ENCODE measurements at regions of chr6 and their contacts with region 1.

Region 1: GRCh38 chr6:158026054-158026900 is 44.6 kb downstream of the SYNJ2 start:
- DNase-seq: peak; percentile 89
- ATAC-seq: peak; percentile 80
- H3K4me3 Mint-ChIP-seq: peak overlapping the region; percentile 69
- H3K27ac Mint-ChIP-seq: peak overlapping the region; percentile 99
- H3K4me1 Mint-ChIP-seq: peaks cover 52% of the 10 kb centered on the region
- H3K27me3 Mint-ChIP-seq: no peaks in the 10 kb centered on the region

Region 2: DNA sequence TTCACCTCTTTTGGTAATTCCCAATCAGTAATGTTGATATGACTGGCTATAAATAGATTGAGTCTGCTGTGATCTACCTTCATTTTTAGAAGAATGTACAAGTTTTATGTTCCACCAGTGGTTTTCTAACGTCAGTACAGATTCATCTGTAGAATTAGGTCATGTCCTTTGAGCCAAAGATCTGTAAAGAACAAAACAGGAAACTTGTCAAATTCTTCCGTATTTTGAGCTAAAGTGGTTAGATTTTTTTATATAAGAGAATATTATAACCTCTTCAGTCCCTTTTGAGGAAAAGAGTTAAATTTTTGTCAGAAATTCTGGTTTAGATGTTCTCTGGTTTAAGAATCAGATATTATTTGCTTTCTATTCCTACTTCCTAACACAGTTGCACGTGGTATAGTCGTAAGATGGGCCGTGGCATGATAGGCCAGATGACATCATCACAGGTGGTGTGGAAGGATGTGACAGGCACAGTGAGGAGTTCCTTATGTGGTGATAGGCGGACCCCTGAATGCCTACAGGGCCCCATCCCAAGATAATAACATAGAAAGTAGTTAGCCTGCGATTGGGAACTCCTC is 141.0 kb before region 1 on chr6:
- CTCF ChIA-PET with region 1: interaction called, 11 read pairs
- POLR2A ChIA-PET with region 1: no interaction called
- DNase-seq: peak; percentile 76
- ATAC-seq: peak; percentile 86
- H3K4me3 Mint-ChIP-seq: no peak overlapping the region
- H3K27ac Mint-ChIP-seq: peak overlapping the region; percentile 58
- H3K4me1 Mint-ChIP-seq: peaks cover 33% of the 10 kb centered on the region
- H3K27me3 Mint-ChIP-seq: no peaks in the 10 kb centered on the region

Region 3: GRCh38 chr6:157981395-157982296 is 44.6 kb before region 1 on chr6 and contains the start of gene SYNJ2:
- CTCF ChIA-PET with region 1: interaction called, 40 read pairs
- POLR2A ChIA-PET with region 1: interaction called, 11 read pairs
- DNase-seq: peak; percentile 91
- ATAC-seq: peak; percentile 94
- H3K4me3 Mint-ChIP-seq: peak within 1 kb of the TSS; percentile 95
- H3K27ac Mint-ChIP-seq: peak within 1 kb of the TSS; percentile 86
- H3K4me1 Mint-ChIP-seq: peaks cover 78% of the 10 kb centered on the region
- H3K27me3 Mint-ChIP-seq: peaks cover 13% of the 10 kb centered on the region
- total RNA-seq, gene SYNJ2: 38.2 to 38.5 TPM

Region 4: DNA sequence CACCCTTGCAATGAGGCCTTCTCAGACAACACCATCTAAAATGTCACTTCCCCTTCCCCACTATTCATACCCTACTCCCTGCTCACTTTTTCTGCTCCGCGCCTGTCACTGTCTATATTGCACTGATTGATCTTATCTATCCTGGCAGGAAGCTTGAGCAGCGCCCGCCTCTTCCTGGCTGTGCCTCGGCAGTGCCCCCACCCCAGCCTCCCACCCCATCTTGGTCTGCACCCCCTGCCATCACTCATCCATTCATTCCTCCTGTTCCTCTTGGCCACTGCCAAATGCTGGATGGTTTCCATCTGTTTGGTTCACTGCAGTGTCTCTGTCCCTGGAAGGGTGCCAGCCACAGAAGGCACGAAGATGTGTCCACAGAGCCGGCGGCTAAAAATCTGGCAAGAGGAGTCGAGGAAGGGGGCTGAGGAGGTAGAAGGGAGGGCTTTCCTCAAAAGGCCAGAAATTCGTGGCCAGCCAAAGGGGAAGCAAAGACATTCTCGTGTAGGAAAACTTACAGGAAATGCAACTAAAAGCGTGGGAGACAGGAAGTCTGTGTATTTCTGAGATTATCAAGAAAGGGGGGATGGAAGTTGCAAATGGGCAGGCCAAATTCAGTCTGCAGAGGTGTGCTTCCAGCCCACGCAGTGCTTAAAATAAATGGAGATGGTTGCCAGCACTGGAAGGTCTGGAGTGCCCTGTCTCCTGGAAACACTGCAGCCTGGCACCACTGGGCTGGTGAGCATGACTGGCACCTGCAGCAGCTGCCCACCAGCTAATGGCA is 17.0 kb before region 1 on chr6:
- CTCF ChIA-PET with region 1: interaction called, 52 read pairs
- POLR2A ChIA-PET with region 1: interaction called, 5 read pairs
- DNase-seq: no peak
- ATAC-seq: peak; percentile 62
- H3K4me3 Mint-ChIP-seq: peak overlapping the region; percentile 42
- H3K27ac Mint-ChIP-seq: peak overlapping the region; percentile 77
- H3K4me1 Mint-ChIP-seq: peaks cover 71% of the 10 kb centered on the region
- H3K27me3 Mint-ChIP-seq: no peaks in the 10 kb centered on the region

Region 5: GRCh38 chr6:158060455-158061360 is 34.4 kb after region 1 on chr6:
- CTCF ChIA-PET with region 1: interaction called, 14 read pairs
- POLR2A ChIA-PET with region 1: no interaction called
- DNase-seq: no peak
- ATAC-seq: peak; percentile 59
- H3K4me3 Mint-ChIP-seq: no peak overlapping the region
- H3K27ac Mint-ChIP-seq: peak overlapping the region; percentile 72
- H3K4me1 Mint-ChIP-seq: peaks cover 32% of the 10 kb centered on the region
- H3K27me3 Mint-ChIP-seq: no peaks in the 10 kb centered on the region

Region 6: DNA sequence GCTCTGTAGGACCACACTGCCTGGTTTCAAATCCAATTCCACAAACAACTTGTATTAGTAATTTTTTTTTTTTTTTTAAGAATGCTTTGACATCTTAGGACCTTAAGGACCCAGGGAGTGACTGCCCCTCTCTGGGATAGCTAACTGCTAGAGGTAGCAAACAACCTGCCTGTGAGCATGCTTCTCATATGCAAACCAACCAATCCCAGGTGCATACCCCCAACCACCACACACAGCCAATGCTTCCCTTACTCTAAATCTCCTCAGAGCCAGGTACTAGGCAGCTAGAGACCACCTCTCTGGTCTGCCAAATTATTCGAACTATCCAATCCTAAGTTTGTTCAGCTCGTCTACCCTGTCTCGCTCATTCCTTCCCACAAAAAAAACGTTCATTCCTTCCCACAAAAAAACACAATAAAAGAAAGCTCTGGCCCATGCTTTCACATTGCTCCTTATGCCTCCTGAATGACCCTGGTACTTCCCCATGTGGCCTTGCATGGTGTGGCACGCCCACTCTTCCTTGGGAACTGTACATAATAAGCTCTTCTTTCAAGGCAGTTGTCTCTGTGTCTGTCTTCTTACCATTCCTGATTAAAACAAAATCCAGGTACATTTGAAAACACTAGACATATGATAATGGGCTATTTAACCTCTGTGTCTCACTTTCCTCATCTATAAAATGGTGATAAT is 135.4 kb after region 1 on chr6:
- CTCF ChIA-PET with region 1: no interaction called
- POLR2A ChIA-PET with region 1: no interaction called
- DNase-seq: no peak
- ATAC-seq: no peak
- H3K4me3 Mint-ChIP-seq: no peak overlapping the region
- H3K27ac Mint-ChIP-seq: no peak overlapping the region
- H3K4me1 Mint-ChIP-seq: peaks cover 9% of the 10 kb centered on the region
- H3K27me3 Mint-ChIP-seq: no peaks in the 10 kb centered on the region

Measured in activated CD8-positive, alpha-beta T cell treated with anti-CD3 and anti-CD28 coated beads, Interleukin-2, amount 10 ng/mL, durations not matched to agents 7 days and 5 days (primary cell).